Sigmoid colon (tissue), 7 donors: ENCODE measurements at regions of chr13 and their contacts with region 1.

Region 1: GRCh38 chr13:42048682-42049453 is 420 bp downstream of the DGKH start:
- DNase-seq: peak; percentile 92
- H3K4me3 ChIP-seq: peak overlapping the region; percentile 55 to 96 (median 86)
- H3K27ac ChIP-seq: peak overlapping the region; percentile 92 to 96 (median 94)
- H3K4me1 ChIP-seq: peaks cover 0 to 23% (median 11%) of the 10 kb centered on the region in 4 donors
- H3K27me3 ChIP-seq: no peaks in the 10 kb centered on the region
- CTCF ChIP-seq: peak in 1 of 4 experiments; percentile 23
- EP300 ChIP-seq: no peak
- POLR2A ChIP-seq: peak; percentile 14 to 20

Region 2: GRCh38 chr13:41880966-41881365 is 167.9 kb before region 1 on chr13:
- intact Hi-C with region 1: no loop called
- DNase-seq: no peak
- H3K4me3 ChIP-seq: no peak overlapping the region
- H3K27ac ChIP-seq: no peak overlapping the region
- H3K4me1 ChIP-seq: no peaks in the 10 kb centered on the region
- H3K27me3 ChIP-seq: no peaks in the 10 kb centered on the region
- CTCF ChIP-seq: no peak
- EP300 ChIP-seq: no peak
- POLR2A ChIP-seq: no peak

Region 3: DNA sequence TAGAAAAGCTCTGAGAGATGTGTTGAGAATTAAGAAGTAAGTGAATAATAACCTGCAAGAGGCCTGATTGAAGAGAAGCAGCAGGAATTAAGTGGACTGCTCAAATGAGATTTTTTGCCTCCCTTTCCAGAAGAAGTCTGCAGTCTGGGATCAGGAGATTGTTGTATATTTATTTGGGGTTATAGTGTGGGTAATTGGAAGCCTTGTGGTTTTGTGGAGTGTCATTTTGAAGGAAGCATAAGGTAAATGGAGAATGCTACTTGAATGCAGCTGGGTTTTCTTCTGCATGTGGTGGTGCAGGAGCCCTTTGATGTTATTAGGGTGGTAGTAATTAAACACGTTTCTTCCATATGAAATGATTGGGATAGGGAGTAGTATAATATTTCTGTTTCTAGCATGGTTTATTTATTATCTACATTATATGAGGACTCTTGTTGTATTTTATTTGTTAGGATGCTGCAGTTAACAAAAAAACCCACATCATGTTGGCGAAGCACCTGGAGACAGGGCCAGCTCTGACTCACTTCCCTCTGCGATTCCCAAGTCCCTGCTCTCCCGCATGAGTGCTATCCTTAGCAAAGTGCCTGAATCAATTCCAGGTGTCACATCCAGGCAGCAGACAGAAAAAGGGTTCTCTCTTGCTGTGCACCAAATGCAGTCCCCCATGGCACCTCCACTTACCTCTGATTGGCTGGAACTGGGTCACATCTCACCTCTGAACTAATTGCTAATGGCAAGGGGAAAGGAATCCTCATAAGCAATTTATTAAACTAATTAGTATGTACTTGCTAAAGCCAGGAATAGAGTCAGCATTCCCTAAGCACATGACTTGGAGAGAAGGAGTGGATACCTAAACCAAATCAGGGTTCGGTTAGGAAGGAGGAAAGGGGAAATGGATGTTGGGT is 54.3 kb after region 1 on chr13:
- intact Hi-C with region 1: no loop called
- DNase-seq: no peak
- H3K4me3 ChIP-seq: no peak overlapping the region
- H3K27ac ChIP-seq: no peak overlapping the region
- H3K4me1 ChIP-seq: peaks cover 0 to 5% (median 3%) of the 10 kb centered on the region in 4 donors
- H3K27me3 ChIP-seq: no peaks in the 10 kb centered on the region
- CTCF ChIP-seq: no peak
- EP300 ChIP-seq: no peak
- POLR2A ChIP-seq: no peak

Region 4: DNA sequence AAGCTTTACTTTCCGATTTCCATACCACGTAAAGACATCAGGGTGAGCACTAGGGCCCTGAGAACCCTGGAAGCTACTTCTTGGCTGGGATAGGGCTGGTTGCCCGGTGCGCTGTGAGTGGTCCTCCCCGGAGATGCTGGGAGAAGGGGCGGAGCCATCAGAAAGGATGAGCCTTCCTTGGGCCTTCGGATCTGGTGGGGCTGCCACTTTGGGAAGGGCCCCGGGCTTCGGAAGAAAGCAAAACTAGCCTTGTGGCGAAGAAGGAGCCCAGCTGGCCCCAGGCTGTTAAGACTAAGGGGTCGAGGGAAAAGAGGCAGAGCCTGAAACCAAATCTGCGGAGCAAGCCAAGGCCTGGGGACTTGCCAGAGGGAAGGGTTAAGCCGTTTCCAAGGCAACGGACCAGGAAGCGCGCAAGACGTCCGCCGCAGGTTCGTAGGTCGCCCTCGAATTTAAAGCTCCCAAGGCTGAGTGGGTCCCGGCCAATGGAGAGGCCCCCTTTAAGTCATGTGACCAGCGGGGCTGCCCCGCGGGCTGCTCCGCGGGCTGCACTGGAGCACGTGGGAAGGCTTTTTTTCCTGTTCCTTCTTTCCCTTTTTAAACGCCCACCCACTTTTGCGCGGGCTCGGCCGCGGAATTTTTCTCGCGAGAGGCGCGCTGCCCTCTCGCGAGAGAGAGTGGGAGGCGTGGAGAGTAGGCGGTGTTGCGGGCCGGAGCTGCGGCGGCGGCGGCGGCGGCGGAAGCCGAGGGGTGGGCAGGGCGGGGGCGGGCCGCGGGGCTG is 222.7 kb after region 1 on chr13:
- intact Hi-C with region 1: loop called (anchors 5 kb)
- DNase-seq: peak; percentile 98
- H3K4me3 ChIP-seq: peak overlapping the region; percentile 83 to 97 (median 90)
- H3K27ac ChIP-seq: peak overlapping the region; percentile 92 to 95 (median 93)
- H3K4me1 ChIP-seq: peaks cover 0 to 34% (median 17%) of the 10 kb centered on the region in 4 donors
- H3K27me3 ChIP-seq: no peaks in the 10 kb centered on the region
- CTCF ChIP-seq: no peak
- EP300 ChIP-seq: peak in 1 of 4 donors; percentile 2
- POLR2A ChIP-seq: no peak

Region 5: DNA sequence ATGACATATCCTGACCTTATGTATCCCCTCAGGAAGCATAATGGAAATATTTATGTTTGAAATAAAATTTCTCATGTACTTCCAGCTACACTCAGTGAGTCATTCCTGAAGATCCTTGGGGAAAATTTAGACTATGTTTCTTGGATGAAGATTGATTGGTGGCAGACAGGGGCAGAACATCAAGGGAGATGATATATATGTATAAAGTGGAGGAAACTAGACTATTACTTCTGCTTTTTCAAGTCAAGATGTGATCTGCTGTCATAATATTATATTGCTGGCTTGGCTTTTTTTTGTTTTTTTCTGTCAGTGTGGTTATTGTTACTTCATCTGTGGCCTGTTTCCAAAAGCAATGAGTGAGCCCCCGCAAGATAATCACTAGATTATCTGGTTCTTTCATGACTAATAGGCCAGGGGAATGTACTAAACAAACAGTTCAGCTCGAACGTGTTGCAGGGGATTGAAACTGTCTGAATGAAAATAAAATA is 437.9 kb after region 1 on chr13:
- intact Hi-C with region 1: no loop called
- DNase-seq: no peak
- H3K4me3 ChIP-seq: no peak overlapping the region
- H3K27ac ChIP-seq: no peak overlapping the region
- H3K4me1 ChIP-seq: no peaks in the 10 kb centered on the region
- H3K27me3 ChIP-seq: no peaks in the 10 kb centered on the region
- CTCF ChIP-seq: no peak
- EP300 ChIP-seq: no peak
- POLR2A ChIP-seq: no peak